Posterior vena cava (tissue), 2 donors: ENCODE measurements at regions of chr3 and their contacts with region 1.

Region 1: DNA sequence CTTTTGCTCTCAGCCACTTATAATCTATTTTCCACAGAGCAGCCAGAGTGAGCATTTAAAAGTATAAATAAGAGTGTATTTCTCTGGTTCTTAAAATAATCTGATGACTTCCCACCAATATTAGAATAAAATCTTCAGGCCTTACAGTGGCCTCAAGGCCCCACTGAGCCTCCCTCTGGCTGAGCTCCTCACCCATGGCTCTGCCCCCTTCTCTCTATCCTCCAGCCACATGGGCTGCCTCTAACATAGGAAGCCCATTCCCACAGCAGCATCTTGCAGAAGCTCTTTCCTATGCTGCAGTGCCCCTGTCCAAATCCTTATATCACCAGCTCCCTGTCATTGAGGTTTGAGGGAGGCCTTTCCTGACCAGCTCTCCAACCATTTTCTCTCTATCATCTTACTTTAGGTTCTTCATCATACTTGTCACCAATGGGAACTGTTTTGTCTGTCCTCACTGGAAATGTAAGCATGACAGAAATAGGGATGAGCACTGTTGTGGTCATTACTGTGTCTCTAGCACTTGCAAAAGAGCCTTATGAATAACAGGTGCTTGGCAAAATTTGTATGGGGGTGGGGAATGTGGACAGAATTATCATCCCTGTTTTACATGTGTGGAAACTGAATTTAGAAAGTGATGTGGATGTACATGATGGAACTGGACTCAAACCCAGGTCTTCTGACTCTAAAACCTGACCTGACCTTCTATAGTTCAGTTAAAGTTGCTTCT is 250.6 kb downstream of the NR1D2 start:
- DNase-seq: no peak

Region 2: GRCh38 chr3:24181256-24181655 is 14.4 kb before region 1 on chr3:
- intact Hi-C with region 1: loop called in 1 of 2 experiments (anchors 2 kb)
- DNase-seq: no peak